MCF 10A (cell line): ENCODE measurements at regions of chr6 and their contacts with region 1.

Region 1: GRCh38 chr6:22366214-22366613 is 69.4 kb upstream of the PRL start:
- DNase-seq: peak; percentile 72
- H3K4me3 Mint-ChIP-seq: no peak overlapping the region
- H3K27ac Mint-ChIP-seq: no peak overlapping the region
- H3K4me1 Mint-ChIP-seq: peaks cover 34% of the 10 kb centered on the region
- H3K27me3 Mint-ChIP-seq: no peaks in the 10 kb centered on the region
- CTCF ChIP-seq: no peak

Region 2: GRCh38 chr6:22442826-22443225 is 76.6 kb after region 1 on chr6:
- CTCF ChIA-PET with region 1: interaction called, 3 read pairs
- POLR2A ChIA-PET with region 1: interaction called, 10 read pairs
- intact Hi-C with region 1: no loop called
- DNase-seq: peak; percentile 65
- H3K4me3 Mint-ChIP-seq: no peak overlapping the region
- H3K27ac Mint-ChIP-seq: peak overlapping the region; percentile 99
- H3K4me1 Mint-ChIP-seq: no peaks in the 10 kb centered on the region
- H3K27me3 Mint-ChIP-seq: no peaks in the 10 kb centered on the region
- CTCF ChIP-seq: no peak